Heart left ventricle (tissue), 16 donors: ENCODE measurements at regions of chr6 and their contacts with region 1.

Region 1: DNA sequence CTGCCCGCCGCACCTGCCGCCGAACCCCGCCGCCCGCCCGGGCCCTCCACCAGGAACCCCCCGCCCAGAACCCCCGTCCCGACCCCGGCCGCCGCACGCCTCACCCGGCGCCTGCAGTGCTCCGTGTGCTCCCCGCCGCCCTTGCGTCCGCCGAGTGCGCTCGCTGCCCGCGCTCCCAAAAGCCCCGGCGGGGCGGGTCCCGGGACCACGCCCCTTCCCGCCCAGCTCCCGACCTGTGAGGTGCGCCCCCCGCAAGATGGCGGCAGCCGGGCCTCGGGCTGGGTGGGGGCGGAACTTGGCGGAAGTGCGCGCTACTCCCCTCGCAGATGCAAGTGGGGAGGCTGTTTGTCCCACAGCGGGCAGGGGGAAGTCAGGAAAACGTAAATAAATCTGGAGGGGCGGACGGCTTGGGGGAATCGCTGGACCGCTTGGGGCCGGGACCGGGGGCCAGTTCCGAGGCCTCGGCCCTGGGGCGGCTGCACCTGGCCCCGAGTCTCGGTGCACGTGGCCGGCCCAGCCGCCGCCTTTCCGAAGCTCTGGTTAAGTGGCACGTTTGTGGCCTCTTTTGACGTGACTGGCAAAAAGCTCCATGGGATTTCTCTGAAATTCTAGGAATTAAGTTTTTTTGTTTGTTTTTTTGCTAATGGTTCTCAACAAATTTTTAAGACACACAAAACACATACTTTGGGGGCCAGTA is at the start of gene EZR:
- DNase-seq: peak; percentile 85 to 92 (median 87)
- ATAC-seq: peak; percentile 44 to 85 (median 78)
- H3K4me3 ChIP-seq: peak within 1 kb of the TSS; percentile 66 to 95 (median 88)
- H3K27ac ChIP-seq: peak within 1 kb of the TSS; percentile 87 to 97 (median 92)
- H3K4me1 ChIP-seq: peaks cover 4 to 39% (median 29%) of the 10 kb centered on the region in 12 donors
- H3K27me3 ChIP-seq: no peaks in the 10 kb centered on the region
- CTCF ChIP-seq: peak in 4 of 12 donors; percentile 10 to 27 (median 18)
- POLR2A ChIP-seq: peak in 1 of 2 donors; percentile 62
- total RNA-seq, gene EZR: 114 to 293 (median 161) TPM

Region 2: GRCh38 chr6:158644231-158645063 is 174.9 kb before region 1 on chr6 and contains the start of gene DYNLT1:
- intact Hi-C with region 1: loop called in 1 of 10 experiments (anchors 10 kb)
- DNase-seq: peak; percentile 93 to 97 (median 96)
- ATAC-seq: peak; percentile 94 to 96 (median 96)
- H3K4me3 ChIP-seq: peak within 1 kb of the TSS; percentile 72 to 99 (median 92)
- H3K27ac ChIP-seq: peak within 1 kb of the TSS; percentile 94 to 100 (median 98)
- H3K4me1 ChIP-seq: peaks cover 8 to 61% (median 39%) of the 10 kb centered on the region in 12 donors
- H3K27me3 ChIP-seq: no peaks in the 10 kb centered on the region
- CTCF ChIP-seq: peak in 1 of 12 donors; percentile 13
- POLR2A ChIP-seq: peak; percentile 86 to 96
- total RNA-seq, gene DYNLT1: 68.4 to 177 (median 121) TPM

Region 3: GRCh38 chr6:158869826-158870648 is 50.7 kb after region 1 on chr6:
- intact Hi-C with region 1: loop called in 2 of 10 experiments (anchors 1 to 5 kb)
- DNase-seq: peak in 1 of 5 donors; percentile 90
- ATAC-seq: peak in 1 of 4 donors; percentile 61
- H3K4me3 ChIP-seq: peak overlapping the region; percentile 31 to 63 (median 50)
- H3K27ac ChIP-seq: peak overlapping the region in 11 of 12 donors; percentile 61 to 88 (median 72)
- H3K4me1 ChIP-seq: peaks cover 0 to 20% (median 4%) of the 10 kb centered on the region in 12 donors
- H3K27me3 ChIP-seq: no peaks in the 10 kb centered on the region
- CTCF ChIP-seq: peak in 2 of 12 donors; percentile 7 to 8
- POLR2A ChIP-seq: no peak

Region 4: GRCh38 chr6:158972241-158973233 is 153.2 kb after region 1 on chr6:
- intact Hi-C with region 1: loop called in 1 of 10 experiments (anchors 10 kb)
- DNase-seq: no peak
- ATAC-seq: peak in 1 of 4 donors; percentile 60
- H3K4me3 ChIP-seq: no peak overlapping the region
- H3K27ac ChIP-seq: no peak overlapping the region
- H3K4me1 ChIP-seq: peaks cover 0 to 5% (median 0%) of the 10 kb centered on the region in 12 donors
- H3K27me3 ChIP-seq: no peaks in the 10 kb centered on the region
- CTCF ChIP-seq: peak; percentile 34 to 73 (median 57)
- POLR2A ChIP-seq: no peak

Region 5: GRCh38 chr6:159116343-159116742 is 297.0 kb after region 1 on chr6:
- intact Hi-C with region 1: no loop called
- DNase-seq: no peak
- ATAC-seq: peak in 2 of 4 donors; percentile 40 to 66
- H3K4me3 ChIP-seq: no peak overlapping the region
- H3K27ac ChIP-seq: peak overlapping the region in 2 of 12 donors; percentile 66 to 91
- H3K4me1 ChIP-seq: peaks cover 0 to 72% (median 8%) of the 10 kb centered on the region in 12 donors
- H3K27me3 ChIP-seq: no peaks in the 10 kb centered on the region
- CTCF ChIP-seq: no peak
- POLR2A ChIP-seq: no peak

Region 6: GRCh38 chr6:159279790-159280277 is 460.5 kb after region 1 on chr6:
- intact Hi-C with region 1: no loop called
- DNase-seq: no peak
- ATAC-seq: peak in 1 of 4 donors; percentile 22
- H3K4me3 ChIP-seq: no peak overlapping the region
- H3K27ac ChIP-seq: no peak overlapping the region
- H3K4me1 ChIP-seq: peaks cover 0 to 6% (median 0%) of the 10 kb centered on the region in 12 donors
- H3K27me3 ChIP-seq: no peaks in the 10 kb centered on the region
- CTCF ChIP-seq: no peak
- POLR2A ChIP-seq: no peak